Left ventricle myocardium superior (tissue), 1 donor: ENCODE measurements at regions of chr1 and their contacts with region 1.

Region 1: DNA sequence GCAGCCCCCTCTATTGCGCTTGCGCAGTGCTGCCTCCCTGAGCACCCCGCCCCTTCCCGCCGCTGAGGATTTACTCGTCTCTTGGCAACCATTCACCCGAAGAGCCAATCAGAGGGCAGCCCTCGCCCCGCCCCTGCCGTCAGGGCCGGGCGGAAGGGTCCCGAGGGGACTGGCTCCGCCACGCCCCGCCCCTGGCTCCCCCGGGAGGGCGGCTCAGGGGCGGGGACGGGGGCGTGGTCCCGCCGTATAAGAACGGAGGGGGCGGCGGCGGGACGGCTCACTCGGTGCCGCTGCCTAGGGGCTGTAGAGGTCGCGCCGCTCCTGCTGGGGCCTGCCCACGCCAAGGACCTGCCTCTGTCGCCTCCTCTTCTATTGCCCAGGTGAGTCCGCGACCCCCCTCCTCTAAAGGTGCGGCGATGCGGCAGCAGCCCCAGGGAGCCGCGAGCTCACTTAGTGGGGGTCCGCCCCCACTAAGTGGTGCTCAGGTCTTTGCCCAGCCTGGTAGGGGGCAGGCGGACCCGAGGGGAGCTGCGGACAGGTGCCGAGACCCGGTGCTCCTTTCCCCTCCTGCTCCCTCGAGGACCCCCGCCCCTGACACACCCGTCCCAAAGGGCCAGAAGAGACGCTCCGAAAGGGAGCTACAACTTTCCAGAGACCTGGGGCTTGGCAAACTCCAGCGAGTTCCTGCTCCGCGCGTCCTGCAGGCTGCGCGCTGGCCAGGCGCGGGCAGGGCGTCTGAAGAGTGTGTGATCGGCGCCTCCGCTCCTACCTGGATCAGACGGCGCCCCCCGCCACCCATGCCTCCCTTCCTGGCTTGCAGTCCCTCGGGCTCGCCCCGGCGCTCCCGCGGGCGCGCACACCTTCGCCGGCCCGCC is at the start of gene TENT5C:
- DNase-seq: peak; percentile 99
- ATAC-seq: peak; percentile 96
- total RNA-seq, gene TENT5C: 16.7 TPM

Region 2: DNA sequence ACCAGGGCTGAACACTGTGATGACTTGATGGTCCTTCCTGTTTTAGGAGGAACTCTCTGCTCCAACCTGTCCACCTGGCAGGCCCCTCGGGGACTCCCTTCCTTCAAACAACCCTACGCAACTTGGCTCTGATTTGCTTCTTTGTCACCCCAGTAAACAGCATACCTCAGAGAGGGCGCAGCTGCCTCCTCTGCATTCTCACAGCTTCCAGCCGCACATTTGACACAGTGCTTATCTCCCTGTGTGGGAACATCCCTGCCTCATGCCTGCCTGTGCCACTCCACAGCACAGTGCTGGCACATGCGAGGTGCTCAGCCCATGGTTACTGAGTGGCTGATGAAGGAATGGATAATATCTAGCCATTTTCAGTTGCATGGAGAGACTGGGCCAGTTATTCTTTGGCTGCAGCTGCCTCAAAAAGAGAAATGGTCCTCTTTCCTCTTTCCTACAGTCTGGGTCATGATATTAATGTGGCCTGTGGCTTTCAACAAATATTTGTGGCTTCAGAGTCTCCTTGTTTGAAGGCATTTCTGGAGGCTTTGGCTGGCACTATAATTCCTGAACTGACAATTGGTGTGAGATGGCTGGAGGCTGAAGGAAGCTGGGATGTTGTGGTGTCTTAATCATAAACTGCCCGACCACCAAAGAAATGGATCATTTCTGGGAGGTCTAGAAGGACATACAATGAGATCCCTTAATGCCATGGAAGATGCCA is 77.7 kb after region 1 on chr1:
- intact Hi-C with region 1: loop called (anchors 5 kb)
- DNase-seq: peak; percentile 60
- ATAC-seq: peak; percentile 70